Naive thymus-derived CD4-positive, alpha-beta T cell (primary cell): ENCODE measurements at regions of chr13 and their contacts with region 1.

Region 1: GRCh38 chr13:77697217-77698103 is at the start of gene SLAIN1:
- DNase-seq: peak; percentile 78 to 90 (median 85)
- ATAC-seq: peak; percentile 90
- H3K4me3 ChIP-seq: peak within 1 kb of the TSS; percentile 94
- H3K4me3 Mint-ChIP-seq: peak within 1 kb of the TSS; percentile 90 to 100 (median 95)
- H3K27ac ChIP-seq: peak within 1 kb of the TSS; percentile 87
- H3K27ac Mint-ChIP-seq: peak within 1 kb of the TSS; percentile 66 to 96 (median 86)
- H3K4me1 ChIP-seq: peaks cover 17 to 18% of the 10 kb centered on the region in 2 donors
- H3K4me1 Mint-ChIP-seq: peaks cover 13 to 53% (median 43%) of the 10 kb centered on the region in 7 donors
- H3K27me3 ChIP-seq: no peaks in the 10 kb centered on the region
- H3K27me3 Mint-ChIP-seq: peaks cover 0 to 40% (median 0%) of the 10 kb centered on the region in 5 donors
- total RNA-seq, gene SLAIN1: 28.3 to 67.8 (median 42.4) TPM

Region 2: DNA sequence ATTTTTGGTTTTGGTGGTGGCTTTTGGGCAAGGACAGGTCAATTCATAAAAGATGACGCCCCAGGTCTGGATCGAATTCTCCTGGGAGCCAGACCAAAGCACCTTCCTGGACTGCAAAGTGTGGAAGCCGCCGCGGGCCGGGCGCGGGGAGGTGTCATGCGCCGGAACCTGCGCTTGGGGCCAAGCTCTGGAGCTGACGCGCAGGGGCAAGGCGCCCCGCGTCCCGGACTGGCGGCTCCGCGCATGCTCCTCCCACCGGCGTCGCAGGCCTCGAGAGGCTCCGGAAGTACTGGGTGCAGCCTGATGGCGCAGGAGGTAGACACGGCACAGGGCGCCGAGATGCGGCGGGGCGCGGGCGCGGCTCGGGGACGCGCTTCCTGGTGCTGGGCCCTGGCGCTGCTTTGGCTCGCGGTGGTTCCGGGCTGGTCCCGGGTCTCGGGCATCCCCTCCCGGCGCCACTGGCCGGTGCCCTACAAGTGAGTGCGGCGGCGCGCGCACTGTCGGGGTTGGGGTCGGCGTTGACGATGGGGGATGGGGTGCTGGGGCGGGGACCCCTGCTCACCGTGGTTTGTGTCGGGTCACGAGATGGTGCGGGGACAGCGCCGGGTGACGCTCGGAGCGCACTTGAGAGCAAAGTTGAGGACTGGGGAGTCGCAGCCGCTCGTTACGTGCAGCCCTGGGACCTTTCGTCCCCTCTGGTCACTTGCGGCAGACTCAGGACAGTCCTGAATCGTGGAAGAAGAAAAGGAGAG is 705.5 kb before region 1 on chr13 and contains the start of gene CLN5:
- CTCF ChIA-PET with region 1: no interaction called
- POLR2A ChIA-PET with region 1: no interaction called
- intact Hi-C with region 1: loop called (anchors 2 to 5 kb)
- DNase-seq: peak; percentile 93 to 98 (median 96)
- ATAC-seq: peak; percentile 92
- H3K4me3 ChIP-seq: peak within 1 kb of the TSS; percentile 87
- H3K4me3 Mint-ChIP-seq: peak within 1 kb of the TSS; percentile 88 to 99 (median 96)
- H3K27ac ChIP-seq: peak within 1 kb of the TSS; percentile 96
- H3K27ac Mint-ChIP-seq: peak within 1 kb of the TSS; percentile 96 to 99 (median 99)
- H3K4me1 ChIP-seq: peaks cover 12 to 19% of the 10 kb centered on the region in 2 donors
- H3K4me1 Mint-ChIP-seq: peaks cover 27 to 59% (median 53%) of the 10 kb centered on the region in 7 donors
- H3K27me3 ChIP-seq: peaks cover 0 to 3% of the 10 kb centered on the region in 2 donors
- H3K27me3 Mint-ChIP-seq: peaks cover 0 to 12% (median 0%) of the 10 kb centered on the region in 5 donors
- total RNA-seq, gene CLN5: 18.9 to 45.3 (median 27.7) TPM

Region 3: DNA sequence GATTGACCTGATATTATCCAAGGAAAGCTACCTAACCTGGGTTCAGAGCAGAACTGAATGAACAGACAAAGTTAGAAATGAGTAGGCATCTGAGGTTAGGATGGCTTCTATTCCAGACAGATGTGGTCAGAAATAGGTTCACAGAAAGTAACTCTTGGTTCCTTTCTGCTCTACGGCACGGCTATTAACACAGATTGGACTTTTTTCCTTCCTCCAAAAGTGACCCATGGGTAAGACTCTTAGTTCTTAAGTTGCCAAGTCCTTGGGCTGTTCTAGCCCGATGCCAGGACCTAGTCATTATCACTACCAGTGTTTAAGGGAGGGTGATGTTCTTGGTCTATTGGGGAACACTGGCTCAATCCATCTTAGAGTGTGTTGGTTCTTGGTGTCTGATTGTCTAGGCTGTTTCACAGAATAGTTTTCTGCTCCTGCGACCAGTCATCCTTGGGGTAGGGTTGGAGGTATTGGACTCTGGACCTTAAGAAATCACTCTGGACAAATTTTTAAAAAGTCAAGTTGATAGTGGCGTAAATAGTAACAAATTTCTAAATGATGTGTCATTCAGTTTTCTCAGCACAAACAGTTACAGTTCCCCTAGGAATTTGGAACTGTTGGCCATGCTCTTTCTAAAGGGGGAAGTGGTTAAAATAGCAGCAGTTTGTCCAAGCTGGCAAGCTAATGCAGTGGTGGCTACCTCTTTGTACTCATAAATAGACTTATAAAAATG is 310.4 kb before region 1 on chr13:
- CTCF ChIA-PET with region 1: no interaction called
- POLR2A ChIA-PET with region 1: no interaction called
- intact Hi-C with region 1: no loop called
- DNase-seq: no peak
- ATAC-seq: no peak
- H3K4me3 ChIP-seq: no peak overlapping the region
- H3K4me3 Mint-ChIP-seq: no peak overlapping the region
- H3K27ac ChIP-seq: no peak overlapping the region
- H3K27ac Mint-ChIP-seq: no peak overlapping the region
- H3K4me1 ChIP-seq: no peaks in the 10 kb centered on the region
- H3K4me1 Mint-ChIP-seq: peaks cover 0 to 9% (median 4%) of the 10 kb centered on the region in 7 donors
- H3K27me3 ChIP-seq: no peaks in the 10 kb centered on the region
- H3K27me3 Mint-ChIP-seq: peaks cover 0 to 47% (median 7%) of the 10 kb centered on the region in 5 donors

Region 4: DNA sequence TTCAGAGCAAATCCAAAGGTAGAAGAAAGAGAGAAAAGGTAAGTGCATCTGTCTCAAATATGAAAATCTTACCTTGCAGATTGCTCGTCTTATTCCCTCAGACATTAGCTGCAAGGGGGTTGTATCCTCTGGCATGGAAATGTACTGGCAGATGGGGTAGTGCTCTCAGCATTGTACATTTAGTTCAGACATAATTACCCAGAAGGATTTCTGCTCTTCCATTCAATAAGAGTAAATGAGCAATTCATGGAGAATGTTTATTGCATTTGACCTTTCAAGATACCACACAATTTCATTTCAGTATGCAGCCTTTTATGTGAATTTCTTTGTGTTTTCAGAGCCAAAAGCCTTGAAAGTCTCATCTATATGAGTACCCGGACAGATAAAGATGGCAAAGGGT is 98.1 kb before region 1 on chr13:
- CTCF ChIA-PET with region 1: no interaction called
- POLR2A ChIA-PET with region 1: no interaction called
- intact Hi-C with region 1: loop called in 1 of 2 experiments (anchors 5 kb)
- DNase-seq: no peak
- ATAC-seq: no peak
- H3K4me3 ChIP-seq: no peak overlapping the region
- H3K4me3 Mint-ChIP-seq: no peak overlapping the region
- H3K27ac ChIP-seq: no peak overlapping the region
- H3K27ac Mint-ChIP-seq: no peak overlapping the region
- H3K4me1 ChIP-seq: no peaks in the 10 kb centered on the region
- H3K4me1 Mint-ChIP-seq: no peaks in the 10 kb centered on the region
- H3K27me3 ChIP-seq: peaks cover 0 to 1% of the 10 kb centered on the region in 2 donors
- H3K27me3 Mint-ChIP-seq: peaks cover under 1 to 19% (median 17%) of the 10 kb centered on the region in 5 donors

Region 5: GRCh38 chr13:77751513-77752456 is 54.3 kb after region 1 on chr13:
- CTCF ChIA-PET with region 1: interaction called, 4 read pairs
- POLR2A ChIA-PET with region 1: interaction called, 4 read pairs
- intact Hi-C with region 1: loop called (anchors 1 kb)
- DNase-seq: peak in 7 of 9 donors; percentile 22 to 63 (median 56)
- ATAC-seq: peak; percentile 86
- H3K4me3 ChIP-seq: no peak overlapping the region
- H3K4me3 Mint-ChIP-seq: no peak overlapping the region
- H3K27ac ChIP-seq: no peak overlapping the region
- H3K27ac Mint-ChIP-seq: peak overlapping the region in 3 of 9 donors; percentile 10 to 77 (median 43)
- H3K4me1 ChIP-seq: peaks cover 0 to 4% of the 10 kb centered on the region in 2 donors
- H3K4me1 Mint-ChIP-seq: peaks cover 9 to 34% (median 18%) of the 10 kb centered on the region in 7 donors
- H3K27me3 ChIP-seq: no peaks in the 10 kb centered on the region
- H3K27me3 Mint-ChIP-seq: no peaks in the 10 kb centered on the region

Region 6: GRCh38 chr13:78658635-78659449 is 961.4 kb after region 1 on chr13 and contains the start of gene OBI1:
- CTCF ChIA-PET with region 1: no interaction called
- POLR2A ChIA-PET with region 1: no interaction called
- intact Hi-C with region 1: loop called (anchors 1 kb)
- DNase-seq: peak; percentile 84 to 94 (median 90)
- ATAC-seq: peak; percentile 99
- H3K4me3 ChIP-seq: peak within 1 kb of the TSS; percentile 94
- H3K4me3 Mint-ChIP-seq: peak within 1 kb of the TSS; percentile 91 to 100 (median 98)
- H3K27ac ChIP-seq: peak within 1 kb of the TSS; percentile 71
- H3K27ac Mint-ChIP-seq: peak within 1 kb of the TSS; percentile 91 to 98 (median 95)
- H3K4me1 ChIP-seq: peaks cover 10 to 11% of the 10 kb centered on the region in 2 donors
- H3K4me1 Mint-ChIP-seq: peaks cover 22 to 55% (median 47%) of the 10 kb centered on the region in 7 donors
- H3K27me3 ChIP-seq: no peaks in the 10 kb centered on the region
- H3K27me3 Mint-ChIP-seq: no peaks in the 10 kb centered on the region
- total RNA-seq, gene OBI1: 4.2 to 17.7 (median 15.9) TPM